ENCODE measurements at regions of chr2 and their contacts with region 1.

Region 1: GRCh38 chr2:98455494-98455976 is 10.9 kb downstream of the INPP4A start:
- DNase-seq: peak; percentile 78 to 96 (median 93)
- H3K4me3 ChIP-seq: peak overlapping the region in 6 of 7 experiments; percentile 6 to 57 (median 27)
- H3K27ac ChIP-seq: peak overlapping the region; percentile 51 to 79
- H3K4me1 ChIP-seq: peaks cover 29 to 82% (median 56%) of the 10 kb centered on the region in 4 experiments
- H3K27me3 ChIP-seq: no peaks in the 10 kb centered on the region

Region 2: DNA sequence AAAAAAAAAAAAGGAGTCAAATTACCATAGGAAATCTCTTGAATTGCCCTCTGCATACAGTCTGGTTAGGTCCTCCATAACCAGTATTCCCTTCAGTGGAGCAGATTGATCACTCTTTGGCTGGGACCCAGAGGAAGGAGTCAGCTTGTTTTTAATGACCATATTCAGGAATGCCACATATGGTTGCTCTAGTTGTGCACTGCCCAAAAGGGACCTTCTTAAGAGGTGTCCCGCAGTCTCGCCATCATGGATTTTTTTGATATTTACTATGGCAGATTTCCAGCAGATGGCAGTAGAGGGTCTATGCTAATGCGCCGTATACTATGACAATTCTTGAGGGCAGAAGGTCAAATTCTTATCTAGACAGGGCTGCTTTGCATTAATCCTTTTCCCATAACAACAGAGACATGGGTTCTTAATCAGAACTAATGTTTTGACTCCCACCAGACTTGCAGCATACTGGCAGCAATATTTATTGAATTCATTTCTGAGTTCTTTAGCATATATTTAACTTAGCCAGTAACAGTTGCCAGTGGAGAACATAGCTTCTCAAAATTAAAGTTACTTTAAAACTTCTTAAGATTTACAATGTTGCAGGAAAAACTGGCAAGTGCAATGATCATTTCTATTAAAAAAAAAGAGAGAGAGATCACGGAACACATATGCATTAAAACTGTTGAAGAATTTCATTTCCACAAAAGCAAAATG is 42.6 kb before region 1 on chr2:
- CTCF ChIA-PET with region 1: interaction called, 10 read pairs
- POLR2A ChIA-PET with region 1: no interaction called
- DNase-seq: peak; percentile 76 to 86 (median 80)
- H3K4me3 ChIP-seq: no peak overlapping the region
- H3K27ac ChIP-seq: no peak overlapping the region
- H3K4me1 ChIP-seq: peaks cover 0 to 2% (median 0%) of the 10 kb centered on the region in 4 experiments
- H3K27me3 ChIP-seq: peaks cover 0 to 2% (median 0%) of the 10 kb centered on the region in 5 experiments